ENCODE measurements at regions of chr4 and their contacts with region 1.

Region 1: DNA sequence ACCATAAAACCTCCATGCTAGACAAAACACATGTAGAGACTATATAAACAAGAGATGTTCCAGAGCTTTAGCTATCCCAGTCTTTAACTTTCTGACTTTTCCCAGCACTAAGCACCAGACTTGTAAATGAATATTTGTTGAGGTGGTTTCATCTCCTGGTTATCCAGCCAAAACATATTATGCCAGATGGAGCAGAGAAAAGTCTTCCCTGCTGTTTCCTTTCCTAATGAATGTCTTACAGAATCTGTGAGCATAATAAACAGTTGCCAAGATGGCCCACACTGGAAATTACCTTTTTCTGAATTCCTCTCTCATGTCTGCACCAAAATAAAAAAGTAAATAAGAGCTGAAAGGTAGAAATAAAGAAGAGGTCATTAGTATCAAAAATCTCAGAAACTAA is 159.2 kb downstream of the TECRL start:
- DNase-seq: no peak
- ATAC-seq: no peak
- H3K4me3 ChIP-seq: no peak overlapping the region
- H3K4me3 Mint-ChIP-seq: no peak overlapping the region
- H3K27ac ChIP-seq: no peak overlapping the region
- H3K27ac Mint-ChIP-seq: no peak overlapping the region
- H3K4me1 ChIP-seq: no peaks in the 10 kb centered on the region
- H3K4me1 Mint-ChIP-seq: no peaks in the 10 kb centered on the region
- H3K27me3 ChIP-seq: no peaks in the 10 kb centered on the region
- H3K27me3 Mint-ChIP-seq: no peaks in the 10 kb centered on the region

Region 2: DNA sequence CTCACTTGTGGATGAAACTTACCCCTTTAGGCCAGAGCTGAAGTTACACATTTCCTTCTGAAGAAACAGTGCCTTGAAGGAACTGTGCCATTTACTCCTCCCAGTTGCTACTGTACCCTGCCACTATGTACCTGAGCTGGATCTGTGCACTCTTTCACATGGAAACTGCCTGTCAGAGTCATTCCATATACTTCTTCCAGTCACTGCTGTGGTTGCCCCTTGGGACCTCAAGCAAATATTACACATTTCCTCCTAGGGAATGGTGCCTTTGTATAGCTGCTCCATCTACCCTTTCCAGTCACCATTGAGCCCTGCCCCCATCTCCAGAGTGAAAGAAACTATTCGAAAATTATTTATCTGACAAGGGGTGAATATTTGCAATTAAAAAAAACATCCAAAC is 1169.1 kb before region 1 on chr4:
- CTCF ChIA-PET with region 1: interaction called in 1 of 2 experiments, 10 read pairs
- POLR2A ChIA-PET with region 1: no interaction called
- DNase-seq: no peak
- ATAC-seq: no peak
- H3K4me3 ChIP-seq: no peak overlapping the region
- H3K4me3 Mint-ChIP-seq: no peak overlapping the region
- H3K27ac ChIP-seq: no peak overlapping the region
- H3K27ac Mint-ChIP-seq: no peak overlapping the region
- H3K4me1 ChIP-seq: no peaks in the 10 kb centered on the region
- H3K4me1 Mint-ChIP-seq: no peaks in the 10 kb centered on the region
- H3K27me3 ChIP-seq: no peaks in the 10 kb centered on the region
- H3K27me3 Mint-ChIP-seq: no peaks in the 10 kb centered on the region

Measured in T-cell (primary cell).